Activated CD8-positive, alpha-beta memory T cell treated with anti-CD3 and anti-CD28 coated beads, Interleukin-2, amount 10 ng/mL, durations not matched to agents 7 days and 5 days (primary cell): ENCODE measurements at regions of chr5 and their contacts with region 1.

Region 1: DNA sequence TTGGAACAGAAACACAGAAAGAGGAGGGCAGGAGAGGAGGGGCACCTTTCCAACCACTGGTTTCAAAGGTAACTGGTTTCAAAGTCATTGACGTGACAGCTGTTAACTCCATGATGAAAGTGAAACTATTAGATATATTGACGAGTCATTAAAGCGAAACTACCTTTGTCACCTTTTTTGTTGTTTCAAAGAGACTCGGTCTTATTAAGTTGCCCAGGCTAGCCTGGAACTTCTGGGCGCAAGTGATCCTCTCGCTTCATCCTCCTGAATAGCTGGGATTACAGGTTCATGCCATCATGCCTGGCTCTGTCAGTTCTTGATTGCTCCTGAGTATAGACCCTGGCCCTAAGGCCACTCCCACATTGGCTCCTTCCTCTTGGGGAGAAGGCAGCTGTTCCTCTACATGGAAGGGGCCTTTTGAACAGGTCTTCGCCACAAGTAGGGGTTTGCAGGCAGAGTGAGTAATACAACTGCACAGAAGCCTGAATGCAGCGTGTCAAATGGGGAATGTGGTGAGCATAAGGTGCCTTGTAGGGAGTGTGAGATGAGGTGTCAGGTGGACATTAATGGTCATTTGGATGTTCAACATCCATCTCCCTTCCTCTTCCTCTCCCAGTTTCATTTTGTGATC is 3.4 kb upstream of the F12 start:
- DNase-seq: no peak
- ATAC-seq: peak; percentile 67
- H3K4me3 Mint-ChIP-seq: peak overlapping the region; percentile 43
- H3K27ac Mint-ChIP-seq: peak overlapping the region; percentile 79
- H3K4me1 Mint-ChIP-seq: peaks cover 31% of the 10 kb centered on the region
- H3K27me3 Mint-ChIP-seq: no peaks in the 10 kb centered on the region

Region 2: GRCh38 chr5:177431317-177432142 is 18.8 kb after region 1 on chr5:
- CTCF ChIA-PET with region 1: interaction called, 717 read pairs
- DNase-seq: peak; percentile 93
- ATAC-seq: peak; percentile 60
- H3K4me3 Mint-ChIP-seq: peak overlapping the region; percentile 89
- H3K27ac Mint-ChIP-seq: peak overlapping the region; percentile 94
- H3K4me1 Mint-ChIP-seq: peaks cover 73% of the 10 kb centered on the region
- H3K27me3 Mint-ChIP-seq: no peaks in the 10 kb centered on the region